ENCODE measurements at regions of chr1 and their contacts with region 1.

Region 1: DNA sequence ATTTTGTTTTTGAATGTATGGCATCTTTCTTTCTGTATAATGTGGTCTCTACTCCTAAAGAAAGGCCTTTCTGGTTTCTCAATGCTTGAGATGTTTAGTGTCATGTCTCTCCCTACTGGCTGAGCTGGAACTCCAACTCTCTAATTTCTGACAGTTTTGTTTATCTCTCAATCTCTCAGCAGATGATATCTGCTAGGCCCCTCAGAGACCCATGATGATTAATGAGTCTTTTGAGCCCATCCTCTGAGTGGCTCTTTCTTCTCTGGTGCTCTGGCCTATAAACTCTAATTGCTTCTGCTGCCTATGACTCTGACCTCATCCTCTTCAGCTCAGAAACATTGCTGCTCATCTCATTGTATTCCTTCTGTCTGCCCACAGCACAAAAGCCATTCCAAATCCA is 46.6 kb downstream of the CRB1 start:
- DNase-seq: no peak

Region 2: GRCh38 chr1:197224160-197224559 is 90.5 kb before region 1 on chr1:
- intact Hi-C with region 1: loop called (anchors 1 kb)
- DNase-seq: no peak

Measured in posterior cingulate gyrus (tissue), 11 donors.